ENCODE measurements at regions of chr17 and their contacts with region 1.

Region 1: GRCh38 chr17:6608321-6608720 is 32.2 kb downstream of the KIAA0753 start:
- DNase-seq: peak; percentile 63
- H3K4me3 Mint-ChIP-seq: no peak overlapping the region
- H3K27ac Mint-ChIP-seq: no peak overlapping the region
- H3K4me1 Mint-ChIP-seq: peaks cover 11% of the 10 kb centered on the region
- H3K27me3 Mint-ChIP-seq: no peaks in the 10 kb centered on the region
- CTCF ChIP-seq: no peak

Region 2: DNA sequence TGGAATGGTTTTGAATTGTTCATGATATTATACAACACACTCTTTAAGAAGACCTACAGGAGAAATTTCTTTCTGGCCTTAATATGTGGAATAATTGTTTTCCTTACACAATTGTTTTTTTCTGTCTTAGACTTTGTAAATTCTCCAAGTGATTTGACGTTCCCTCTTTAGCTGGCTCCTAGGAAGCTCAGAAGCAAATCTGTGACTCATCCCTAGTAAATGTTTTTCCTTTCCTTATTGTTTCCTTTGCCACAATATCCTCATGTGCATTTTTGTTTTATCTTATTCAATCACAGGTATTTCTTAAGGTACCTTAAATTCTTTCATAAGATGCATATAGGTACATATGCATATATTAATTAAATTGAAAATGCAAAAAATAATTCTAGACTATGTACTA is 18.7 kb after region 1 on chr17:
- CTCF ChIA-PET with region 1: interaction called, 10 read pairs
- POLR2A ChIA-PET with region 1: interaction called, 5 read pairs
- intact Hi-C with region 1: no loop called
- DNase-seq: peak; percentile 14
- H3K4me3 Mint-ChIP-seq: no peak overlapping the region
- H3K27ac Mint-ChIP-seq: no peak overlapping the region
- H3K4me1 Mint-ChIP-seq: peaks cover 18% of the 10 kb centered on the region
- H3K27me3 Mint-ChIP-seq: no peaks in the 10 kb centered on the region
- CTCF ChIP-seq: no peak

Measured in MCF 10A (cell line).